ENCODE measurements at regions of chr9 and their contacts with region 1.

Region 1: GRCh38 chr9:89602978-89603766 is 1.6 kb upstream of the GADD45G start:
- DNase-seq: peak; percentile 74
- ATAC-seq: peak; percentile 51
- H3K4me3 ChIP-seq: peak overlapping the region; percentile 34 to 52
- H3K27ac ChIP-seq: no peak overlapping the region
- H3K4me1 ChIP-seq: peaks cover 28 to 44% of the 10 kb centered on the region in 2 experiments
- H3K27me3 ChIP-seq: peaks cover 42% of the 10 kb centered on the region
- CTCF ChIP-seq: peak; percentile 81 to 94 (median 90)
- POLR2A ChIP-seq: no peak
- RAD21 ChIP-seq: peak; percentile 95

Region 2: DNA sequence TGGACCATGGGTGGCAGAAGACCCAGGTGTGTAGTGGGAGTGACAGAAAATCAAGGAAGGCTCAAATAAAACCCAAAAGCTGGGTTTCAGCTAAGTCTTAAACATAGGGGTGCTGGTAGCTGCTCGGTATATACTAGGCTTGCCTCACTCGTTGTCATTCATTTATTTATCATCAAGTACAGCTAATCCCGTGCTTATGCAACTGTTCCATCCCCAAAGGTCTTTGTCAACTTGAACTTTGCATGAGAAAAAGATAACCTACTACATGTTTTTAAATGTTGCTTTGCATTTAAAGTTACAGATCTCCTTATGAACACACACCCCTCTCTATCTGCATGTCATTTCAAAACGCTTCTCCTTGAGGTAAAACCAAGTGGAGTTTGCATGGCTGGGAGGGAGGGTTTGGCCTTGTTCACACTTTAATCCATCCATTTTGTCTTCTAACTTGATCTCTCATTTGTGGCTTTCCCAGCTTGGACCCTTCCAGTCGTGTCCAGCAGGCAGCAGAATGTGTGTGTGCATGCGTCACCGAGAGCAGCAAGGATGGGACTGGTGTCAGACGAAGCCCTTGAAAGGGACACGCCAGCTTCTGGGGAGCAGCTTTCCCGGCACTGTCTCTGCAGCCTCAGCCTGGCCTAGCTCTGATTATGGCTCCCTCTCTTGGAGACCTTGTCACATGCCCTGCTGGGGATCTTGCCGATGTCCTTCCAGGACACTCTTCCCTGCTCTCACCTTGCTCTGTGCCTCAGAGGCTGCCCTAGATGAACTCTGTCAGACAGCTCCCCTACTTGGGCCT is 135.2 kb after region 1 on chr9:
- CTCF ChIA-PET with region 1: no interaction called
- POLR2A ChIA-PET with region 1: no interaction called
- RAD21 ChIA-PET with region 1: interaction called in 1 of 2 experiments, 10 read pairs
- intact Hi-C with region 1: no loop called
- DNase-seq: no peak
- ATAC-seq: peak; percentile 66
- H3K4me3 ChIP-seq: no peak overlapping the region
- H3K27ac ChIP-seq: no peak overlapping the region
- H3K4me1 ChIP-seq: no peaks in the 10 kb centered on the region
- H3K27me3 ChIP-seq: peaks cover 20% of the 10 kb centered on the region; the same call in 1 of the 2 replicates
- CTCF ChIP-seq: 0 out of 6 replicates have a peak, but pooled peaks of 1 of the 3 experiments have one; percentile 12
- POLR2A ChIP-seq: no peak
- RAD21 ChIP-seq: 0 out of 2 replicates have a peak, but pooled peaks have one; percentile 11

Region 3: DNA sequence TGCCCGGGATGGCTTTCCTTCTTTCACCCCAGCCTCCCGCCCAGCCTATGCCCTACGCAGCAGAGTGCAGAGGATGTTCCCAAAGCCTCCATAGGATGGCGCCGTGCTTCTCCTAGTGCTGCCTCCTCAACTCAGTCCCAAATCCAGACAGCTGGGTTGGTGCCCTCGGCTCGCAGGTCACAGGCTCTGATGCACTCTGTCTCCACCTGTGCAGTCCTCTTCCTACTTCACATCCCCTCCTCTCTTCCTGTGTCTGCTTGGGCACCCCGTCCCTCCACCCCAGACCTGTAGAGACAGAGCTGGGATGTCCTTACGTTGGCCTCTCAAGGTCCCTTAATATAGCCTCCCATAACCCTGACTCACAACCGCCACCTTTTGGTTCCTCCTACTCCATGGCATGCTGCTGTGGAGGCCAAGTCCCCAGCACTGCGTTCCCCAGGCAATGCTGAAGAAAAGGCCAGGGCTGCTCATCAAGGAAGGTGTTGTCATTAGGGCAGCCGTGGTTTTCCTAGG is 316.1 kb after region 1 on chr9:
- CTCF ChIA-PET with region 1: interaction called, 13 read pairs
- POLR2A ChIA-PET with region 1: no interaction called
- RAD21 ChIA-PET with region 1: no interaction called
- intact Hi-C with region 1: loop called (anchors 1 kb)
- DNase-seq: peak; percentile 15
- ATAC-seq: peak; percentile 88
- H3K4me3 ChIP-seq: no peak overlapping the region
- H3K27ac ChIP-seq: no peak overlapping the region
- H3K4me1 ChIP-seq: peaks cover 3 to 4% of the 10 kb centered on the region in 2 experiments; a peak in 2 of 4 replicates
- H3K27me3 ChIP-seq: peaks cover 20% of the 10 kb centered on the region
- CTCF ChIP-seq: peak; percentile 26 to 49 (median 27); a peak in 3 of 6 replicates
- POLR2A ChIP-seq: no peak
- RAD21 ChIP-seq: peak; percentile 48

Region 4: DNA sequence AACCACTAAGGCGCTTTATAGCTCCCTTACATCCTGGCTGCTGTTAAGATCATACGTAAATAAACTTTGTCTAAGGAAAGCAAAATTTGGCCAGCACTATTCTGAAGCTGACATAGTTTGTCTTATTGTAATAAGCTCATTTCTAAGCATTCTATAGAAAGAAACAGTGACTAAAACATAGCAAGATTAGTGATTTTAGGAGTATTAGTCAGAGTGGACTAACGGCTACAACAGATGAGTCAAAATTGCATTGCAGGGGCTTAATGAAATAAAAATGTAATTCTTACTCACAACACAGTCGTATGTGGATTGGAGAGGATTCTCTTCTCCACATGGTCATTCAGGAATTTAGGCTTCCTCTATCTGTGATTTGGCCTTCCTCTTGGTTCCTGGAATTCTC is 349.2 kb after region 1 on chr9:
- CTCF ChIA-PET with region 1: no interaction called
- POLR2A ChIA-PET with region 1: no interaction called
- RAD21 ChIA-PET with region 1: no interaction called
- intact Hi-C with region 1: no loop called
- DNase-seq: no peak
- ATAC-seq: no peak
- H3K4me3 ChIP-seq: no peak overlapping the region
- H3K27ac ChIP-seq: no peak overlapping the region
- H3K4me1 ChIP-seq: no peaks in the 10 kb centered on the region
- H3K27me3 ChIP-seq: peaks cover 9% of the 10 kb centered on the region; the same call in 1 of the 2 replicates
- CTCF ChIP-seq: no peak
- POLR2A ChIP-seq: no peak
- RAD21 ChIP-seq: no peak

Region 5: DNA sequence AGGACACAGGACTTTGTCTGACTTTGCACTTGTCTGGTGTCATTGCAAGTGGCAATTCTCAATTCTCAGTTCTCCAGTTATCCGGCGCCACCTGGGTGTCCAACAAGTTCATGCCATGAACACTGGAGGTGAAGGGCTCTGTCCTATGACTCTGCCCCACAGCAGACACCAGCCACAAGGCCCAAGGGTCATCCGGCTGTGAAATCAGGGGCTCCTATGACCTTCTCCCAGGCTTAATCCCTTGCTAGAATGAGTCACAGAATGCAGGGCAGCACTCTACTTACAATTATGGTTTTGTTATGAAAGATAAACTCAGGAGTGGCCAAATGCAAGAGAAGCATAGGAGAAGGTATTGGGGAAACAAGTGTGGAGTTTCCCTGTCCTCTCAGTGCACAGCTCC is 393.6 kb after region 1 on chr9:
- CTCF ChIA-PET with region 1: interaction called, 8 read pairs
- POLR2A ChIA-PET with region 1: interaction called, 3 read pairs
- RAD21 ChIA-PET with region 1: no interaction called
- intact Hi-C with region 1: loop called (anchors 1 kb)
- DNase-seq: no peak
- ATAC-seq: peak; percentile 55
- H3K4me3 ChIP-seq: no peak overlapping the region
- H3K27ac ChIP-seq: no peak overlapping the region
- H3K4me1 ChIP-seq: peaks cover 7 to 11% of the 10 kb centered on the region in 2 experiments; a peak in 3 of 4 replicates
- H3K27me3 ChIP-seq: peaks cover 21% of the 10 kb centered on the region; the same call in 1 of the 2 replicates
- CTCF ChIP-seq: peak in 1 of 3 experiments; percentile 12; a peak in 1 of 6 replicates
- POLR2A ChIP-seq: no peak
- RAD21 ChIP-seq: peak; percentile 45

Region 6: GRCh38 chr9:90095682-90096081 is 492.5 kb after region 1 on chr9:
- CTCF ChIA-PET with region 1: interaction called, 297 read pairs
- POLR2A ChIA-PET with region 1: interaction called, 10 read pairs
- RAD21 ChIA-PET with region 1: interaction called, 6 to 10 read pairs
- intact Hi-C with region 1: no loop called
- DNase-seq: no peak
- ATAC-seq: no peak
- H3K4me3 ChIP-seq: no peak overlapping the region
- H3K27ac ChIP-seq: no peak overlapping the region
- H3K4me1 ChIP-seq: no peaks in the 10 kb centered on the region
- H3K27me3 ChIP-seq: peaks cover 40% of the 10 kb centered on the region
- CTCF ChIP-seq: no peak
- POLR2A ChIP-seq: no peak
- RAD21 ChIP-seq: no peak

Region 7: DNA sequence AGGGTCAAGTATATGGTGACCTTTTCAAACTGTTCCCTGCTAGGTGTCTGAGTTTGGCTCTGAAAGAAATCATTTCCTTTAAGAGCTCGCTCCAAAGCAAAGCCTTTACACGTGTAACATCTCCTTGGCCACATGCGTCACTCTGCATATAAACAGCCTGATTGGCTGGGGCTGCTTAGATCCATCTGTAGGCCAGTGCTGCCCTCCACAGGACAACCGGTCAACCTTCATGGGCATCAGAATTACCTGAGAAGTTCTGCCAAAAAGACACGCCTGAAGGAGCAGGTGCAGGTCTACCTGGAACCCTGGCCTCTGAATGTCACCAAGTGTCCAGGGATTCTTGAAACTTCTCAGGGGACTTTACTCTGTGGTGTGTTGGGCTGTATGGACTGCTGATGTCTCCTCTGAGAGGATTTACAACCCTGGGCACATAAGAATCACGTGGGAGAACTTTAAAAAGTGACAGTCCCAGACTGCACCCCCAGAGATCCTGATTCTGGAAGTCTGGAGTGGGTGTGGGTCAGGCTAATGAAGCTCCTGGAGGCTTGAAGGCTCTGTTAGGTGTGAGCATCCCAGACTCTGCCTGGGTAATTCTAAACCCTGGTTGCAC is 499.2 kb after region 1 on chr9:
- CTCF ChIA-PET with region 1: interaction called, 297 read pairs
- POLR2A ChIA-PET with region 1: interaction called, 10 read pairs
- RAD21 ChIA-PET with region 1: interaction called, 9 to 10 read pairs
- intact Hi-C with region 1: loop called (anchors 1 kb)
- DNase-seq: peak; percentile 90
- ATAC-seq: peak; percentile 99
- H3K4me3 ChIP-seq: no peak overlapping the region
- H3K27ac ChIP-seq: no peak overlapping the region
- H3K4me1 ChIP-seq: peaks cover 6 to 9% of the 10 kb centered on the region in 2 experiments; a peak in 2 of 4 replicates
- H3K27me3 ChIP-seq: 0 out of 2 replicates have a peak, but pooled peaks cover 10% of the 10 kb centered on the region
- CTCF ChIP-seq: peak; percentile 78 to 85 (median 80)
- POLR2A ChIP-seq: no peak
- RAD21 ChIP-seq: peak; percentile 92

Region 8: DNA sequence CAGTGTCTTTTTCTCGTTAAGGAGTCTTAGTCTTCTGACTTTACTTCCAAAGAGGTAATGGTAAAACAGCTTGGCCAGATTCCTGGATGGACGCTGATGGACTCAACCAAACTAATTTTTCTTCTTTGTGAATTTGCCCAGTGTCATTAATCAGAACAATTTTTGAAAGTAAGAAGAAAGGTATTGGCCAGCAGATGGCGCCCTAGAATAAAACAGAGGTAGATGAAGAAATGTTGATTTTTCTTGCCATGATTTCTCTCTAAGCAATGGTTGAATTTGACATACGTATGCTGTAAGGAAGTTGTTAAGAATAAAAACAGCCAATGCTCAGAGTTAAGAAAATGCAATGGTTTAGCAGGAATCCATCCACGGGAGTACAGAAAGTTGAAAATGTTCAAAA is 539.4 kb after region 1 on chr9:
- CTCF ChIA-PET with region 1: interaction called, 17 read pairs
- POLR2A ChIA-PET with region 1: no interaction called
- RAD21 ChIA-PET with region 1: no interaction called
- intact Hi-C with region 1: no loop called
- DNase-seq: peak; percentile 21
- ATAC-seq: peak; percentile 47; the same call in 1 of the 2 replicates
- H3K4me3 ChIP-seq: no peak overlapping the region
- H3K27ac ChIP-seq: no peak overlapping the region
- H3K4me1 ChIP-seq: no peaks in the 10 kb centered on the region
- H3K27me3 ChIP-seq: peaks cover 20% of the 10 kb centered on the region
- CTCF ChIP-seq: peak; percentile 48 to 74 (median 48)
- POLR2A ChIP-seq: no peak
- RAD21 ChIP-seq: peak; percentile 66